Dorsolateral prefrontal cortex (tissue), 120 donors: ENCODE measurements at regions of chr14 and their contacts with region 1.

Region 1: DNA sequence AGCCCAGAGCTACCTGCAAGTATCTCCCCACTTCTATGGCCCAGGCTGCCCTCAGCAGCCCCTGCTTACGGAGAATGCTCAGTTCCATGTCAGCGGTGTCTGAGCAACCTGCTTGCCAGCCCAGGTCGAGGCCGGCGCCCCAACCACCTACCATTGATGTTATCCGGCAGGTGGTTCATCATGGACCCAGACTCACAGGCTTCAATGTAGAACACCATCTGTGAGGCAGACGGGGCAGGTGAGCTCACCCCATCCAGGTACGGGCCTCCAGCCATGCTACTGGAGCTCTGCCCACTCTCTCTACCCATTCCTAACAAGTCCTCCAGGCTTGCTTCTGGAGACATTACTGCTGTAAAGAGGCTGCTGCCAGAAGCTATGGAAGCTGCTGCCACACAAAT is 35.8 kb downstream of the LGMN start:
- DNase-seq: peak in 2 of 10 donors; percentile 33 to 69
- H3K4me3 ChIP-seq: no peak overlapping the region
- H3K27ac ChIP-seq: peak overlapping the region in 58 of 59 donors; percentile 2 to 93 (median 78)
- H3K27me3 ChIP-seq: no peaks in the 10 kb centered on the region
- CTCF ChIP-seq: no peak

Region 2: DNA sequence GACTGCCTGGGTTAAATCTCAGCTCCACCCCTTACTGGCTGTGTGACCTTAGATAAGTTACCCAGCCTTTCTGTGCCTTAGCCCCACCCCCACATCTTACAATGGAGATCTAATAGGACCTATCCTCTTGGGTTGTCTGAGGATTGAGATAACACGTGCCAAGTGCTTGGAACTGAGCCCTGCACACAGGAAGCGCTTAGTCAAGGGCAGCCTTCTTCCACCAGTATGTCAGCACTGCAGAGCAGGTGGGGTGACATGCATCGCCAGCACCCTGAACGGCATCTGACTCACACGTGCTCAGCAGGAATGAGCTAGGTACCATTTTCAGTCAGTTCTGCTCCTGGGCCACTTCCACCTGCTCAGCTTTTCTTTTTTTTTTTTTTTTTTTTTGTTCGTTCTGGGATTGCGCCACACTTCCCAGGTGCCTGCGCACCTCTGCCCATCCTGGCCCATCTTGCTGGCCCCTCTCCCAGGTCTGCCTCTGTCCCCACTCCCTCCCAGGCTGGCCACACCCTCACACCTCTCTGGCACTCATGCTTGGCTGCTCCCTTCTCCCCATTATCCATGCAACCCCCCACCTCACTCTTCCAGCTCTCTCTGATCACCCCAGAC is 16.2 kb after region 1 on chr14:
- intact Hi-C with region 1: no loop called
- DNase-seq: peak in 1 of 10 donors; percentile 9
- H3K4me3 ChIP-seq: no peak overlapping the region
- H3K27ac ChIP-seq: no peak overlapping the region
- H3K27me3 ChIP-seq: no peaks in the 10 kb centered on the region
- CTCF ChIP-seq: no peak

Region 3: GRCh38 chr14:92783816-92784431 is 71.3 kb after region 1 on chr14:
- intact Hi-C with region 1: loop called in 1 of 2 experiments (anchors 5 kb)
- DNase-seq: peak in 1 of 10 donors; percentile 8
- H3K4me3 ChIP-seq: no peak overlapping the region
- H3K27ac ChIP-seq: no peak overlapping the region
- H3K27me3 ChIP-seq: no peaks in the 10 kb centered on the region
- CTCF ChIP-seq: peak; percentile 29 to 81 (median 65)

Region 4: GRCh38 chr14:93184388-93185353 is 472.0 kb after region 1 on chr14 and contains the starts of genes LYSET and MOAP1:
- intact Hi-C with region 1: no loop called
- DNase-seq: peak; percentile 74 to 92 (median 86)
- H3K4me3 ChIP-seq: peak within 1 kb of the TSS; percentile 72 to 100 (median 96)
- H3K27ac ChIP-seq: peak within 1 kb of the TSS; percentile 64 to 99 (median 96)
- H3K27me3 ChIP-seq: no peaks in the 10 kb centered on the region
- CTCF ChIP-seq: peak in 28 of 56 donors; percentile 2 to 49 (median 26)
- total RNA-seq, gene LYSET: 7.5 to 23.0 (median 15.3) TPM
- total RNA-seq, gene MOAP1: 71.5 to 285 (median 191) TPM